HCT116 (cell line): ENCODE measurements at regions of chr11 and their contacts with region 1.

Region 1: GRCh38 chr11:43311791-43312607 is at the start of gene API5:
- DNase-seq: peak; percentile 93
- ATAC-seq: peak; percentile 99
- H3K4me3 ChIP-seq: peak within 1 kb of the TSS; percentile 92 to 95
- H3K27ac ChIP-seq: peak within 1 kb of the TSS; percentile 77
- H3K4me1 ChIP-seq: peaks cover 10 to 15% of the 10 kb centered on the region in 2 experiments
- H3K27me3 ChIP-seq: no peaks in the 10 kb centered on the region
- CTCF ChIP-seq: peak; percentile 50 to 76 (median 74); a peak in 5 of 6 replicates
- POLR2A ChIP-seq: peak; percentile 73
- RAD21 ChIP-seq: peak; percentile 35; the same call in 1 of the 2 replicates
- total RNA-seq, gene API5: 122 TPM

Region 2: DNA sequence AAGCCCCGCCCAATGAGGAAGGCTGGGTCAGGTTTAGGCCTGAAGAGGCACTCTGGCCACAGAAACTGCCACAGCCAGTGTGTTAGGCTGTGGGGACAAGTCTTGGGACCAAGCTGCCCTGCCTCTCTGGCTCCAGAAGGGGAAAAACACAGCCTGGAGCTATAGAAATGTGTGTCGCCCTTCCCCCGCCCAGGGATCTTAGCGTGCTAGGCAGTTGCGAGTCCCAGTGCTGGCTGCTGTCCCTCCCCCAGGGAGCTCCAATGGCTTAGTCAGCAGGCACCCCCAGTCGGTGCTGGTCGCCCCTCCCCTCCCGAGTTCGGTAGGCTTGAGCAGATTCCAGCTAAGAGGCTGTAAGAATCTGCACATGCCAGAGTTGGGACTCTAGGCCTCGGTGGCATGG is 99.7 kb before region 1 on chr11:
- CTCF ChIA-PET with region 1: no interaction called
- POLR2A ChIA-PET with region 1: no interaction called
- RAD21 ChIA-PET with region 1: no interaction called
- intact Hi-C with region 1: no loop called
- DNase-seq: no peak
- ATAC-seq: no peak
- H3K4me3 ChIP-seq: no peak overlapping the region
- H3K27ac ChIP-seq: no peak overlapping the region
- H3K4me1 ChIP-seq: no peaks in the 10 kb centered on the region
- H3K27me3 ChIP-seq: no peaks in the 10 kb centered on the region
- CTCF ChIP-seq: no peak
- POLR2A ChIP-seq: no peak
- RAD21 ChIP-seq: no peak

Region 3: GRCh38 chr11:43298397-43298796 is 13.6 kb before region 1 on chr11:
- CTCF ChIA-PET with region 1: interaction called, 11 read pairs
- POLR2A ChIA-PET with region 1: no interaction called
- RAD21 ChIA-PET with region 1: no interaction called
- intact Hi-C with region 1: no loop called
- DNase-seq: no peak
- ATAC-seq: no peak
- H3K4me3 ChIP-seq: no peak overlapping the region
- H3K27ac ChIP-seq: no peak overlapping the region
- H3K4me1 ChIP-seq: no peaks in the 10 kb centered on the region
- H3K27me3 ChIP-seq: no peaks in the 10 kb centered on the region
- CTCF ChIP-seq: no peak
- POLR2A ChIP-seq: no peak
- RAD21 ChIP-seq: no peak

Region 4: GRCh38 chr11:43358801-43359421 is 46.9 kb after region 1 on chr11 and contains the start of gene TTC17:
- CTCF ChIA-PET with region 1: interaction called, 6 read pairs
- POLR2A ChIA-PET with region 1: interaction called, 5 read pairs
- RAD21 ChIA-PET with region 1: interaction called in 1 of 2 experiments, 4 read pairs
- intact Hi-C with region 1: loop called (anchors 1 kb)
- DNase-seq: peak; percentile 77
- ATAC-seq: peak; percentile 94
- H3K4me3 ChIP-seq: peak within 1 kb of the TSS; percentile 87 to 97
- H3K27ac ChIP-seq: peak within 1 kb of the TSS; percentile 86
- H3K4me1 ChIP-seq: peaks cover 3 to 20% of the 10 kb centered on the region in 2 experiments; a peak in 3 of 4 replicates
- H3K27me3 ChIP-seq: no peaks in the 10 kb centered on the region
- CTCF ChIP-seq: no peak
- POLR2A ChIP-seq: peak; percentile 79
- RAD21 ChIP-seq: no peak
- total RNA-seq, gene TTC17: 51.6 TPM

Region 5: GRCh38 chr11:43422696-43423095 is 110.7 kb after region 1 on chr11:
- CTCF ChIA-PET with region 1: no interaction called
- POLR2A ChIA-PET with region 1: no interaction called
- RAD21 ChIA-PET with region 1: interaction called in 1 of 2 experiments, 3 read pairs
- intact Hi-C with region 1: loop called (anchors 10 kb)
- DNase-seq: no peak
- ATAC-seq: no peak
- H3K4me3 ChIP-seq: no peak overlapping the region
- H3K27ac ChIP-seq: no peak overlapping the region
- H3K4me1 ChIP-seq: no peaks in the 10 kb centered on the region
- H3K27me3 ChIP-seq: no peaks in the 10 kb centered on the region
- CTCF ChIP-seq: no peak
- POLR2A ChIP-seq: no peak
- RAD21 ChIP-seq: no peak